ENCODE measurements at regions of chr2 and their contacts with region 1.

Region 1: GRCh38 chr2:202387608-202388342 is 11.6 kb downstream of the BMPR2 start:
- DNase-seq: no peak
- ATAC-seq: no peak
- H3K4me3 ChIP-seq: no peak overlapping the region
- H3K4me3 Mint-ChIP-seq: no peak overlapping the region
- H3K27ac ChIP-seq: no peak overlapping the region
- H3K27ac Mint-ChIP-seq: no peak overlapping the region
- H3K4me1 ChIP-seq: no peaks in the 10 kb centered on the region
- H3K4me1 Mint-ChIP-seq: peaks cover 20% of the 10 kb centered on the region
- H3K27me3 ChIP-seq: no peaks in the 10 kb centered on the region
- H3K27me3 Mint-ChIP-seq: no peaks in the 10 kb centered on the region
- CTCF ChIP-seq: no peak

Region 2: GRCh38 chr2:201466050-201466675 is 921.6 kb before region 1 on chr2:
- CTCF ChIA-PET with region 1: no interaction called
- POLR2A ChIA-PET with region 1: no interaction called
- intact Hi-C with region 1: no loop called
- DNase-seq: no peak
- ATAC-seq: no peak
- H3K4me3 ChIP-seq: no peak overlapping the region
- H3K4me3 Mint-ChIP-seq: no peak overlapping the region
- H3K27ac ChIP-seq: no peak overlapping the region
- H3K27ac Mint-ChIP-seq: no peak overlapping the region
- H3K4me1 ChIP-seq: no peaks in the 10 kb centered on the region
- H3K4me1 Mint-ChIP-seq: no peaks in the 10 kb centered on the region
- H3K27me3 ChIP-seq: no peaks in the 10 kb centered on the region
- H3K27me3 Mint-ChIP-seq: no peaks in the 10 kb centered on the region
- CTCF ChIP-seq: no peak

Region 3: GRCh38 chr2:202361108-202361507 is 26.7 kb before region 1 on chr2:
- CTCF ChIA-PET with region 1: no interaction called
- POLR2A ChIA-PET with region 1: no interaction called
- intact Hi-C with region 1: loop called (anchors 1 kb)
- DNase-seq: no peak
- ATAC-seq: no peak
- H3K4me3 ChIP-seq: no peak overlapping the region
- H3K4me3 Mint-ChIP-seq: no peak overlapping the region
- H3K27ac ChIP-seq: no peak overlapping the region
- H3K27ac Mint-ChIP-seq: no peak overlapping the region
- H3K4me1 ChIP-seq: no peaks in the 10 kb centered on the region
- H3K4me1 Mint-ChIP-seq: no peaks in the 10 kb centered on the region
- H3K27me3 ChIP-seq: no peaks in the 10 kb centered on the region
- H3K27me3 Mint-ChIP-seq: no peaks in the 10 kb centered on the region
- CTCF ChIP-seq: no peak